ENCODE measurements at regions of chr9 and their contacts with region 1.

Region 1: GRCh38 chr9:79571309-79572031 is at the start of gene TLE4:
- DNase-seq: peak; percentile 100
- ATAC-seq: peak; percentile 88 to 89
- H3K4me3 ChIP-seq: peak within 1 kb of the TSS; percentile 77 to 88 (median 84)
- H3K27ac ChIP-seq: peak within 1 kb of the TSS; percentile 91 to 98 (median 92)
- H3K4me1 ChIP-seq: peaks cover 25 to 30% of the 10 kb centered on the region in 2 donors
- H3K27me3 ChIP-seq: no peaks in the 10 kb centered on the region
- CTCF ChIP-seq: no peak
- POLR2A ChIP-seq: peak; percentile 96 to 99
- total RNA-seq, gene TLE4: 30.1 to 64.6 (median 43.4) TPM

Region 2: DNA sequence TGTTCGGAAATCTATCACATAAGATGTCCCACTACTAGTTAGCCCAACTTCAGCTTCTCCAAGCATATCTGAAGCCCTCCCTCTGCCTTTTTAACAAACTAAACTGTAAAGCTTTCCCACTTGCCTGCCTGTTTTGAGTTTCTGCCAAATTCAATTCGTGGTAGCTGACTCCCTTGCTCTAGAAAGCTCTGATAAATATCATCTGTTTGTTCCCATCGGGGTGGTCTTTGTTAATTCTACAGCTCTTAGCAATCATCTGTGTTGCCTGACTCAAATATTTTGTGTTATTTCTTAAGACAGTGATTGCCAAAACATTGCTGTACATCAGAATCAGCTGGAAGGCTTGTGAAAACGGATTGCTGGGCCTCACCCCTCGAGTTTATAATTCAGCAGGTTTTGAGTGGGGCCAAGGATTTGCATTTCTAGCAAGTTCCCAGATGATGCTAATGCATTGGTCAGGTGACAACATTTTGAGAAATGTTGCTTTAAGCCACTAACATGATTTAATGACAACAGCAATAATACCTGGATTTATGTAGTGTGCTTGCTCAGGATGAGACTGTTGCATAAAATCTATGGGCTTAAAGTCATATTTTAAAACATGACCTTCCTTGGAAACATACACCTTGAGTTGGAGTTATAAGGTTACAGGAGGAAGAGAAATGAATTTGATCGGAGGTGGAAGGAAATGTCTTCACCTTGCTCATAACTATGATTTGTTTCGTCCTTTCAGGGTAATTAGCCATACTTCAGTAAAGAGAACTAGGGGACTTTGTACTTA is 642.7 kb before region 1 on chr9:
- in situ Hi-C with region 1: no loop called
- intact Hi-C with region 1: no loop called
- DNase-seq: no peak
- ATAC-seq: no peak
- H3K4me3 ChIP-seq: no peak overlapping the region
- H3K27ac ChIP-seq: no peak overlapping the region
- H3K4me1 ChIP-seq: no peaks in the 10 kb centered on the region
- H3K27me3 ChIP-seq: no peaks in the 10 kb centered on the region
- CTCF ChIP-seq: no peak
- POLR2A ChIP-seq: no peak

Region 3: DNA sequence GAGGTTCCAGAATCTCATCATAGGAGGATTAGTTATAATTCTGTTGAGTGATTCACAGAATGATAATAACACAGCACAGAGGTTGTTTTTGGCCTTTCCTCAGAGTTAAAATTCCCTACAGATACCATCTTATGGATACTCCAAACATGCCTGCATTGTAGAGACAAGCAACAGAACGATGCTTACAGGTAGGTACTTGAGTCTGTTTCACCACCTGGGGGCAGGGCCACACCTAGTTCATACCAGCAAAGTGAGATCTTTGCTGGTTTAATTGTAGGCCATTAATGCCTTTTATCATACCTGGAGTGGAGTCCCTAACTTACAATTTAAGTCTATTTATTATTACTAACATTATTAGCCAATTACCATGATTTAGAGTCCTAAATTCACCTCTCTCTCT is 416.2 kb before region 1 on chr9:
- in situ Hi-C with region 1: no loop called
- intact Hi-C with region 1: loop called (anchors 10 kb)
- DNase-seq: no peak
- ATAC-seq: no peak
- H3K4me3 ChIP-seq: no peak overlapping the region
- H3K27ac ChIP-seq: no peak overlapping the region
- H3K4me1 ChIP-seq: peaks cover 0 to 9% of the 10 kb centered on the region in 2 donors
- H3K27me3 ChIP-seq: no peaks in the 10 kb centered on the region
- CTCF ChIP-seq: no peak
- POLR2A ChIP-seq: no peak

Region 4: GRCh38 chr9:79512249-79512648 is 59.2 kb before region 1 on chr9:
- in situ Hi-C with region 1: no loop called
- intact Hi-C with region 1: no loop called
- DNase-seq: no peak
- ATAC-seq: no peak
- H3K4me3 ChIP-seq: no peak overlapping the region
- H3K27ac ChIP-seq: no peak overlapping the region
- H3K4me1 ChIP-seq: no peaks in the 10 kb centered on the region
- H3K27me3 ChIP-seq: no peaks in the 10 kb centered on the region
- CTCF ChIP-seq: no peak
- POLR2A ChIP-seq: no peak

Region 5: GRCh38 chr9:79603222-79603920 is 31.9 kb after region 1 on chr9:
- in situ Hi-C with region 1: no loop called
- intact Hi-C with region 1: no loop called
- DNase-seq: no peak
- ATAC-seq: no peak
- H3K4me3 ChIP-seq: no peak overlapping the region
- H3K27ac ChIP-seq: no peak overlapping the region
- H3K4me1 ChIP-seq: peaks cover 15 to 19% of the 10 kb centered on the region in 2 donors
- H3K27me3 ChIP-seq: no peaks in the 10 kb centered on the region
- CTCF ChIP-seq: no peak
- POLR2A ChIP-seq: no peak

Region 6: DNA sequence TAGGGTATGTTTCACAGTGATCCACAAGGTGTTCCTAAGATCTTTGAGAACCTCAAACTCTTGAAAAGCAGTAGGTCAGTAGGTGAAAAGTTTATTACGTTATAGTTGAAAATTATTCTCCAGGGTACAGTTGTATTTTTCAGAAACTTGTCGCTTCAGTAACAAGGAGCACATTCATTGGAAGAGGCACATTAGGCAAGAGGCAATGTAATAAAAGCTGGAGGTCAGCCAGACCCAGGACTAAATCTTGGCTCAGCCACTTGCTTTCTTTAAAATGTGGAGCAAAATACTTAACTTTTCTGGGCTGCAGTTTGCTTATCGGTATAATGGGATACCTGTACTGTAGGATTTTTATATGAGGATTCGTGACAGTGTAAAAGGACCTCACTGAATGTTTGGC is 45.9 kb after region 1 on chr9:
- in situ Hi-C with region 1: no loop called
- intact Hi-C with region 1: loop called (anchors 2 kb)
- DNase-seq: peak in 1 of 2 donors; percentile 22
- ATAC-seq: peak in 1 of 2 donors; percentile 41
- H3K4me3 ChIP-seq: no peak overlapping the region
- H3K27ac ChIP-seq: peak overlapping the region; percentile 50 to 73 (median 66)
- H3K4me1 ChIP-seq: peaks cover 54 to 62% of the 10 kb centered on the region in 2 donors
- H3K27me3 ChIP-seq: no peaks in the 10 kb centered on the region
- CTCF ChIP-seq: no peak
- POLR2A ChIP-seq: no peak

Region 7: GRCh38 chr9:79686381-79687130 is 115.1 kb after region 1 on chr9:
- in situ Hi-C with region 1: no loop called
- intact Hi-C with region 1: loop called (anchors 2 kb)
- DNase-seq: peak; percentile 20 to 39
- ATAC-seq: peak; percentile 79 to 89
- H3K4me3 ChIP-seq: peak overlapping the region in 1 of 4 donors; percentile 8
- H3K27ac ChIP-seq: peak overlapping the region; percentile 3 to 52 (median 21)
- H3K4me1 ChIP-seq: peaks cover 43 to 63% of the 10 kb centered on the region in 2 donors
- H3K27me3 ChIP-seq: no peaks in the 10 kb centered on the region
- CTCF ChIP-seq: no peak
- POLR2A ChIP-seq: no peak

Region 8: GRCh38 chr9:79955300-79955699 is 383.8 kb after region 1 on chr9:
- in situ Hi-C with region 1: loop called in 1 of 4 experiments (anchors 25 kb)
- intact Hi-C with region 1: no loop called
- DNase-seq: no peak
- ATAC-seq: no peak
- H3K4me3 ChIP-seq: no peak overlapping the region
- H3K27ac ChIP-seq: no peak overlapping the region
- H3K4me1 ChIP-seq: no peaks in the 10 kb centered on the region
- H3K27me3 ChIP-seq: no peaks in the 10 kb centered on the region
- CTCF ChIP-seq: peak in 1 of 5 experiments; percentile 14
- POLR2A ChIP-seq: no peak

Region 9: DNA sequence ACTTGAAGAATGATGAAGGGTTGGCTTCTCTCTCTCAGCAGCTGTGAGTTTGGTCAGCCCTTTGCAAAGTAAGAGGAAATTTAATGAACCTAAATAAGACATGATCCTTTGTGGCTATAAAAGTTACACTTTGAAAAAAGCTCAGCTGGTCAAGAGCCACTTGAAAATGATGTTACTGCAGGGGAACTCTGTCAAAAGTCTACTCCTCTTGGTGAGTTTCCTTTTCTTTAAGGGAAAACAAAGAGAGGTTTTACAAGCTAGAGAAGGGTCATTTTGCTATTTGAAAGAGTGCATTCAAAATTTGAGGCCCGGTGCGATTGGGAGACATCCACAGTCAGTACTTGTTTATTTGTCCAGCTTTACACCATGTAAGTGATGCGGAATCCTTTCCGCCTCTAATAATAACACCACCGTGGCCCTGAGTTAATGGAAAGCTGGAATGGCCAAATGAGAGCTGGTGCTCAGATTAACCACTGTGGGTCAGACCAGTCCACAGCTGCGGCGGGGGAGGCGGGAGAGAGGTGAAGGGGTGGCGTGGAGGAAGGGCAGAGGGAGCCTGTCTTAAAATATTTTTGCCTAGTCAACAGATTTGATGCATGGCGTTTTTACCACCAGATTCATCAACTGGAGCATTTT is 404.3 kb after region 1 on chr9:
- in situ Hi-C with region 1: loop called in 1 of 4 experiments (anchors 25 kb)
- intact Hi-C with region 1: loop called (anchors 5 kb)
- DNase-seq: peak; percentile 87
- ATAC-seq: peak; percentile 87 to 88
- H3K4me3 ChIP-seq: peak overlapping the region; percentile 5 to 44 (median 32)
- H3K27ac ChIP-seq: peak overlapping the region; percentile 78 to 89 (median 82)
- H3K4me1 ChIP-seq: peaks cover 16 to 31% of the 10 kb centered on the region in 2 donors
- H3K27me3 ChIP-seq: no peaks in the 10 kb centered on the region
- CTCF ChIP-seq: peak in 2 of 5 experiments; percentile 36 to 49
- POLR2A ChIP-seq: no peak

Region 10: GRCh38 chr9:80061940-80062339 is 490.5 kb after region 1 on chr9:
- in situ Hi-C with region 1: no loop called
- intact Hi-C with region 1: loop called (anchors 5 kb)
- DNase-seq: peak; percentile 67 to 83
- ATAC-seq: peak; percentile 97
- H3K4me3 ChIP-seq: no peak overlapping the region
- H3K27ac ChIP-seq: peak overlapping the region; percentile 86 to 91 (median 90)
- H3K4me1 ChIP-seq: peaks cover 25 to 27% of the 10 kb centered on the region in 2 donors
- H3K27me3 ChIP-seq: no peaks in the 10 kb centered on the region
- CTCF ChIP-seq: no peak
- POLR2A ChIP-seq: peak in 1 of 2 donors; percentile 36